GM10248 (cell line): ENCODE measurements at regions of chr5 and their contacts with region 1.

Region 1: GRCh38 chr5:132456296-132457001 is 34.1 kb downstream of the IRF1 start:
- DNase-seq: peak; percentile 42
- CTCF ChIP-seq: no peak

Region 2: GRCh38 chr5:132272311-132273210 is 183.9 kb before region 1 on chr5:
- CTCF ChIA-PET with region 1: no interaction called
- POLR2A ChIA-PET with region 1: no interaction called
- DNase-seq: peak; percentile 70
- CTCF ChIP-seq: peak; percentile 71

Region 3: GRCh38 chr5:132386644-132387286 is 69.7 kb before region 1 on chr5:
- CTCF ChIA-PET with region 1: interaction called, 16 read pairs
- POLR2A ChIA-PET with region 1: no interaction called
- DNase-seq: peak; percentile 87
- CTCF ChIP-seq: peak; percentile 89

Region 4: GRCh38 chr5:132419502-132420468 is 36.7 kb before region 1 on chr5:
- CTCF ChIA-PET with region 1: interaction called, 104 read pairs
- POLR2A ChIA-PET with region 1: interaction called, 3 read pairs
- DNase-seq: peak; percentile 73
- CTCF ChIP-seq: peak; percentile 86

Region 5: DNA sequence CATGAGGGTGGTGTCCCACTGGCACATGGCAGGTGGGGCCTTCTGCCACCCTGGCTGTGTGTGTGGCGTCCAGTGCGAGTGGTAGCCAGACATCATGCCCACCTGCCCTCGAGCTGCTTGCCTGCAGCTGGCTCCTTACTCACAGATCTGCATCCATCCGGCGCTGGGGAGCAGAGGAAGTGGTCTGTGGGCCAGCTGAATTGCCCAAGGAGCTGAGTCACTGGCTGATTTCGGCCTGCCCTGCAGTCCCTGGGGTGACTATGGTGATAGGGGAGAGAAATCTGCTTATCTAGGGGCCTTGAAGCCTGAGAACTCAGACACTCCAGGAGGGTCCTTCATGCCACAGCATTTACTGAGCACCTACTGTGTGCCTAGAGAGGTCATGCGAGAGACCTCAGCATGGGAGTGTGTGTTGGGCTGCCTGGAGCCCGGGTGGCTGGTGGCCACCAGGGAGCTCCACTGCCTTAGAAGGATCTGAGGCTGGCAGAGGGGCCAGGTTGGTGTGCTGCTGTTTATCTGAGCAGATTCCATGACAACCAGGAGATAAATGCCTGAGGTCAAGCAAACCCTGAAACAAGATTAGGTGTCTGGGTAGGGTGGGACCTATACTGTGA is 29.8 kb before region 1 on chr5:
- CTCF ChIA-PET with region 1: interaction called, 104 read pairs
- POLR2A ChIA-PET with region 1: interaction called, 12 read pairs
- DNase-seq: peak; percentile 67
- CTCF ChIP-seq: peak; percentile 62

Region 6: DNA sequence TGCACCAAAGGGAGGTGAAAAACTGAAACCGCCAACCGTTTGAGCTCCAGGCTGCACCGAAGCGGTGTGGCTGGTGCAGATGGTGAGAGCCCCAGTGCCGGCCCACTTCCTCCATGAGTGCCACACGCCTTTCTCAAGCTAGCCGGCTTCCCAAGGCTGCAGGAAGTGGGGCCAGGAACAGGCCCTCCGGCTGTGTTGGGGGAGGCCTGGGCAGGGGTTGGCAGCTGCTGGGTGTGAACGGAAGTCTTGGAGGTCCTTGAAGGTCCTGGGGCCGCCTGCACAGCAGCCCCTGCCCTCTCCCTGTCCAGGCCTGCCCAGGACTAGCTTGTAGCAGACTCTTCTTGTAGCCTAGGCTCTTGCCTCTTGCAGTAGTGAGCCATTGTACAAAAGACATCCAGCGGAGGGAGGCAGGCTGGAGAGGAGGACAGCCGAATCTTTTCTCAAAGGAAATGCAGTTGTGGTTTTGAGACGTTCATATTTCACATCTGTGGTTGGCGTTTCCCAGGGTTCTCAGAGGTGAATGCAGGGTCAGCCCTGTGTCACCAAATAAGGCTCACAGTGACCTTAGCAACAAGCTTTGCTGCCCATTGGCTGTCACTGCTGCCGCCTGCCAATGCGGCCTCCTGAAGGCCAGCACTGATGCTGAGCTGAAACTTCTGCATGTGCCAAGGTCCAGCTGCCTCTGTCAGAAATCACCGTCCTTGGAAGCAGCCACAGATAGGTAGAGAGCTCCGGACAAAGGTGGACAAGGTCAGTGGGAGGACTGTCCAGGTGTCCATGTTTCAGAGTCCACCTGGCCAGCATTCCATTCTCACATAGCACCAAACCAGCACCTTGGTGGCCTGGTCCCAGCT is 10.2 kb after region 1 on chr5:
- CTCF ChIA-PET with region 1: interaction called, 64 read pairs
- POLR2A ChIA-PET with region 1: interaction called, 6 read pairs
- DNase-seq: peak; percentile 73
- CTCF ChIP-seq: no peak

Region 7: DNA sequence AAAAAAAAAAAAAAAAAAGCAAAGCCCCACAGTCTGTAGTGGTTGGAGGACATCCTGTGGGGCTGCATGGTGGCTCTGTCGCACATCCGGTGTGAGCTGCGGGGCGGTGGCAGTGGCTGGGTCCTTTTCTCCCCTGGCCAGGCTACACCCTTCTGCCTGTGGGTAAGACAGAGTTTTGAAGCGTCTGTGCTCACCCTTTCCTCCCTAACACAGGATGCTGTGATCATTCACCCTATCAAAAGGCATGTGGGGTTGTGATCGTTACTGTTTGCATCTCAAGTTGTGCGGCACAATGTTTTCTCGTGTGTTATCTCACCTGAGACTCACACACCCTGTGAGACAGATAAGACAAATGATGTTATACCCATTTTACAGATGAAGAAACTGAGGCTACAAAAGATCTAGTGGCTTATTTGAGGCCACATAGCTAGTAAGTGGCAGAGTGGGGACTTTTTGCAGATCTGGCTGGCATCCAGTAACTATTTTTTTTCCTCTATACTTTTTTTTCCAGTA is 16.6 kb after region 1 on chr5:
- CTCF ChIA-PET with region 1: interaction called, 64 read pairs
- POLR2A ChIA-PET with region 1: interaction called, 7 read pairs
- DNase-seq: peak; percentile 73
- CTCF ChIP-seq: no peak

Region 8: GRCh38 chr5:132479111-132479951 is 22.9 kb after region 1 on chr5:
- CTCF ChIA-PET with region 1: interaction called, 16 read pairs
- POLR2A ChIA-PET with region 1: interaction called, 11 read pairs
- DNase-seq: no peak
- CTCF ChIP-seq: no peak